ENCODE measurements at regions of chr22 and their contacts with region 1.

Region 1: GRCh38 chr22:36977947-36978660 is 41.1 kb downstream of the TST start:
- DNase-seq: peak; percentile 95
- ATAC-seq: peak; percentile 86
- H3K4me3 Mint-ChIP-seq: peak overlapping the region; percentile 76
- H3K27ac Mint-ChIP-seq: peak overlapping the region; percentile 77
- H3K4me1 Mint-ChIP-seq: peaks cover 8% of the 10 kb centered on the region
- H3K27me3 Mint-ChIP-seq: no peaks in the 10 kb centered on the region

Region 2: GRCh38 chr22:36546092-36546804 is 431.9 kb before region 1 on chr22:
- CTCF ChIA-PET with region 1: interaction called, 3 read pairs
- POLR2A ChIA-PET with region 1: no interaction called
- intact Hi-C with region 1: loop called in 1 of 2 experiments (anchors 1 kb)
- DNase-seq: peak; percentile 72
- ATAC-seq: peak; percentile 59
- H3K4me3 Mint-ChIP-seq: no peak overlapping the region
- H3K27ac Mint-ChIP-seq: no peak overlapping the region
- H3K4me1 Mint-ChIP-seq: peaks cover 8% of the 10 kb centered on the region
- H3K27me3 Mint-ChIP-seq: peaks cover 8% of the 10 kb centered on the region

Region 3: DNA sequence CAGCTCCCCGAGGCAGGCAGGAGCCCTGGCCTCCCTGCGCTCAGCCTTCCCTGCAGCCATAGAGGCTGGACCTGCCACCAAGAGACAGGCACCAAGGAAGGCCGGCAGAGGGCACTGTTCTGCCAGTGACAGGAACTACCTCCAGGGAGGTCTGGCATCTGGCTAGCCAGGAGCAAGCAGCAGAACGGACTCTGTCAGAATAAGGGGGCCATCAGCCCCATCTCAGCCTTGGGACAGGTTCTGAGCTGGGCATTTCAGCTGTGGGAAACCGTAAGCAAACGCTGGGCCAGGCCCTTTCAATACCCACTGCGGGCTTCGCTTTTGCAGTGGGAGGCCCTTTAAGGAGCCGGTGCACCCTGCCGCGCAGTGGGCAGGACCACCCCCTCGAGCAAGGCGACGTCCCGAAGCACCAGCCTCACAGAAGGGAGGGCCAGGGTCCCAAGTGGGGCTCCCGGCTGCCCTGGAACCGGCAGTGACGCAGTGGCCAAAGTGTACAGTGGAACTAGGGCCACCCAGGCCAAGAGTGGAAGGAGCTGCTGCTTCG is 220.4 kb before region 1 on chr22:
- CTCF ChIA-PET with region 1: interaction called, 4 read pairs
- POLR2A ChIA-PET with region 1: no interaction called
- intact Hi-C with region 1: loop called (anchors 1 kb)
- DNase-seq: peak; percentile 89
- ATAC-seq: peak; percentile 93
- H3K4me3 Mint-ChIP-seq: no peak overlapping the region
- H3K27ac Mint-ChIP-seq: peak overlapping the region; percentile 37
- H3K4me1 Mint-ChIP-seq: no peaks in the 10 kb centered on the region
- H3K27me3 Mint-ChIP-seq: peaks cover 4% of the 10 kb centered on the region

Region 4: GRCh38 chr22:36781656-36782627 is 196.2 kb before region 1 on chr22:
- CTCF ChIA-PET with region 1: interaction called, 17 read pairs
- POLR2A ChIA-PET with region 1: interaction called, 3 read pairs
- intact Hi-C with region 1: loop called (anchors 1 kb)
- DNase-seq: peak; percentile 94
- ATAC-seq: peak; percentile 99
- H3K4me3 Mint-ChIP-seq: peak overlapping the region; percentile 24
- H3K27ac Mint-ChIP-seq: peak overlapping the region; percentile 59
- H3K4me1 Mint-ChIP-seq: peaks cover 24% of the 10 kb centered on the region
- H3K27me3 Mint-ChIP-seq: no peaks in the 10 kb centered on the region

Region 5: GRCh38 chr22:36873680-36874537 is 104.2 kb before region 1 on chr22:
- CTCF ChIA-PET with region 1: interaction called, 4 read pairs
- POLR2A ChIA-PET with region 1: no interaction called
- intact Hi-C with region 1: loop called (anchors 1 to 5 kb)
- DNase-seq: peak; percentile 67
- ATAC-seq: peak; percentile 89
- H3K4me3 Mint-ChIP-seq: no peak overlapping the region
- H3K27ac Mint-ChIP-seq: peak overlapping the region; percentile 88
- H3K4me1 Mint-ChIP-seq: peaks cover 18% of the 10 kb centered on the region
- H3K27me3 Mint-ChIP-seq: peaks cover 6% of the 10 kb centered on the region

Region 6: DNA sequence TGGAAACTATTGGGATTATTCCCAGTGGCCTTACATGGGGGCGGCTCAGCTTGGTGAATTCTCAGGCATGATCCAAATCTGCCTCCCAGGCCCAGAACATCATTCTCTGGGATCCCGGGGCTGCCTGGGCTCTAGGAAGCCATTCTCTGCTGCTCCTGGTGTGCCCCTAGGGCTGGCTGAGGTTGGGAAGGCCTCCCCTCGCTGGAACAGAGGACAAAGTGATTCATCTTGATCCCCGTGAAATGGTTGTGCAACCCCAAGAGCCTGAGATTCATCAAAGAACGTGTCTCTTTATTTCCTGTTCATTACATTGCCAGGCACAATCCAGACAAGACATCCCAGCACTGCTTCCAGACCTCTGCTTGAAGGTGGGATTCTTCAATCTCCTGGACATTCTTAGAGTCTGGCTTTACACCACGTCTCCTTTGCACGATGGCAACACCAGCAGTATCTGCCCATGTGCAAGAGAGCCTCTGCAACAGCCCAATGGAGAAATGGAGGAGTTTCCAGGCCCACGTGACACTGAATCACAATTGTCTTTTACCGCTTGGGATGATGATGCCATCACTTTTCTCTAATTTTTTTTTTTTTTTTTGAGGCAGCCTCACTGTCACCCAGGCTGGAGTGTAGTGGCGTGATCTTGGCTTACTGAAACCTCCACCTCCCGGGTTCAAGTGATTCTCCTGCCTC is 11.1 kb before region 1 on chr22:
- CTCF ChIA-PET with region 1: interaction called, 19 read pairs
- POLR2A ChIA-PET with region 1: no interaction called
- intact Hi-C with region 1: no loop called
- DNase-seq: no peak
- ATAC-seq: no peak
- H3K4me3 Mint-ChIP-seq: no peak overlapping the region
- H3K27ac Mint-ChIP-seq: no peak overlapping the region
- H3K4me1 Mint-ChIP-seq: no peaks in the 10 kb centered on the region
- H3K27me3 Mint-ChIP-seq: peaks cover 4% of the 10 kb centered on the region

Region 7: GRCh38 chr22:37282385-37282677 is 304.2 kb after region 1 on chr22 and contains the start of gene CYTH4:
- CTCF ChIA-PET with region 1: no interaction called
- POLR2A ChIA-PET with region 1: no interaction called
- intact Hi-C with region 1: no loop called
- DNase-seq: peak; percentile 93
- ATAC-seq: peak; percentile 87
- H3K4me3 Mint-ChIP-seq: peak within 1 kb of the TSS; percentile 82
- H3K27ac Mint-ChIP-seq: peak within 1 kb of the TSS; percentile 98
- H3K4me1 Mint-ChIP-seq: peaks cover 60% of the 10 kb centered on the region
- H3K27me3 Mint-ChIP-seq: no peaks in the 10 kb centered on the region
- total RNA-seq, gene CYTH4: 33.1 to 42.8 TPM